CD14-positive monocyte (primary cell): ENCODE measurements at regions of chr15 and their contacts with region 1.

Region 1: GRCh38 chr15:55196458-55197361 is at the start of gene RSL24D1:
- DNase-seq: peak; percentile 97 to 98 (median 98)
- H3K4me3 ChIP-seq: peak within 1 kb of the TSS; percentile 85 to 87 (median 85)
- H3K4me3 Mint-ChIP-seq: no peak within 1 kb of the TSS
- H3K27ac ChIP-seq: peak within 1 kb of the TSS; percentile 95 to 96
- H3K27ac Mint-ChIP-seq: no peak within 1 kb of the TSS
- H3K4me1 ChIP-seq: peaks cover 27 to 34% of the 10 kb centered on the region in 2 donors
- H3K4me1 Mint-ChIP-seq: peaks cover 7% of the 10 kb centered on the region
- H3K27me3 ChIP-seq: no peaks in the 10 kb centered on the region
- H3K27me3 Mint-ChIP-seq: peaks cover 0 to 3% (median 1%) of the 10 kb centered on the region in 3 donors
- CTCF ChIP-seq: peak; percentile 35
- polyA plus RNA-seq, gene RSL24D1: 28.0 to 84.2 (median 73.0) TPM

Region 2: GRCh38 chr15:55218056-55218455 is 21.3 kb after region 1 on chr15:
- intact Hi-C with region 1: no loop called
- DNase-seq: no peak
- H3K4me3 ChIP-seq: no peak overlapping the region
- H3K4me3 Mint-ChIP-seq: no peak overlapping the region
- H3K27ac ChIP-seq: peak overlapping the region in 1 of 2 donors; percentile 70
- H3K27ac Mint-ChIP-seq: peak overlapping the region; percentile 63 to 85 (median 75)
- H3K4me1 ChIP-seq: peaks cover 55% of the 10 kb centered on the region in 2 donors
- H3K4me1 Mint-ChIP-seq: peaks cover 52% of the 10 kb centered on the region
- H3K27me3 ChIP-seq: no peaks in the 10 kb centered on the region
- H3K27me3 Mint-ChIP-seq: peaks cover 0 to 1% (median 0%) of the 10 kb centered on the region in 3 donors
- CTCF ChIP-seq: no peak

Region 3: DNA sequence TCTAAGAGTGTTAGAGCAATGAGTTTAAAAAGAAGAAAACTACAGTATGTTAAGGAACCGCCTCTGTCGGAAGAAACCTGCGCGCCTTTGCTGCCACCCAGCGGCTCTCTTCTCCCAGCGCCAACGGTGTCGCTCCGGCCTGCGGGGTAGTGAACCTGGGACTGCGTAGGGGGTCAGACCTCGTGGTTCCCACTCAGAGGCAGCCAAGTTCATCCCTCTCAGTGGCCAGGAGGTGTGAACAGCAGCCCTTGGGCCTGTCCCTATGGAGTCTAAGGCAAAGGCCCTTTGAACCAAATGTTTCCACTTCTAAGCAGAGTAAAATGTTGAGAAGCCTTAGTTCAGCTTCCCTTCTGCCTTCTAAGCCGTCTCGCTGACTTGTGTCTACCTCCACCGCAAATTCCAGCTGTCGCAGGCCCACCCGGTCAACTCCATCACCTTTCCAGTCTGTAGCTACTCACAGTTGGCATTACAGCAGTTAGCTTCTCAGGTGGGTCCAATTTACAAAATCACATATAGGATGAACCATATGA is 93.9 kb after region 1 on chr15:
- intact Hi-C with region 1: loop called in 1 of 2 experiments (anchors 5 kb)
- DNase-seq: peak; percentile 75 to 87 (median 81)
- H3K4me3 ChIP-seq: peak overlapping the region; percentile 72 to 99 (median 95)
- H3K4me3 Mint-ChIP-seq: peak overlapping the region; percentile 94 to 96
- H3K27ac ChIP-seq: peak overlapping the region; percentile 95 to 99
- H3K27ac Mint-ChIP-seq: peak overlapping the region; percentile 89 to 99 (median 91)
- H3K4me1 ChIP-seq: peaks cover 36 to 55% of the 10 kb centered on the region in 2 donors
- H3K4me1 Mint-ChIP-seq: peaks cover 50% of the 10 kb centered on the region
- H3K27me3 ChIP-seq: no peaks in the 10 kb centered on the region
- H3K27me3 Mint-ChIP-seq: peaks cover 0 to 1% (median 0%) of the 10 kb centered on the region in 3 donors
- CTCF ChIP-seq: peak; percentile 90

Region 4: GRCh38 chr15:55407949-55408791 is 211.5 kb after region 1 on chr15 and contains the starts of genes CCPG1 and PIERCE2:
- intact Hi-C with region 1: loop called in 1 of 2 experiments (anchors 5 kb)
- DNase-seq: peak; percentile 87 to 91 (median 89)
- H3K4me3 ChIP-seq: peak within 1 kb of the TSS; percentile 83 to 96 (median 89)
- H3K4me3 Mint-ChIP-seq: peak within 1 kb of the TSS; percentile 85 to 97
- H3K27ac ChIP-seq: peak within 1 kb of the TSS; percentile 92
- H3K27ac Mint-ChIP-seq: peak within 1 kb of the TSS; percentile 89 to 97 (median 94)
- H3K4me1 ChIP-seq: peaks cover 41 to 52% of the 10 kb centered on the region in 2 donors
- H3K4me1 Mint-ChIP-seq: peaks cover 46% of the 10 kb centered on the region
- H3K27me3 ChIP-seq: no peaks in the 10 kb centered on the region
- H3K27me3 Mint-ChIP-seq: no peaks in the 10 kb centered on the region
- CTCF ChIP-seq: peak; percentile 90
- polyA plus RNA-seq, gene CCPG1: 21.1 to 196 (median 145) TPM
- polyA plus RNA-seq, gene PIERCE2: 0.13 to 1.3 (median 0.61) TPM

Region 5: GRCh38 chr15:55681631-55682030 is 484.9 kb after region 1 on chr15:
- intact Hi-C with region 1: no loop called
- DNase-seq: no peak
- H3K4me3 ChIP-seq: no peak overlapping the region
- H3K4me3 Mint-ChIP-seq: no peak overlapping the region
- H3K27ac ChIP-seq: no peak overlapping the region
- H3K27ac Mint-ChIP-seq: no peak overlapping the region
- H3K4me1 ChIP-seq: peaks cover 7 to 16% of the 10 kb centered on the region in 2 donors
- H3K4me1 Mint-ChIP-seq: peaks cover 15% of the 10 kb centered on the region
- H3K27me3 ChIP-seq: no peaks in the 10 kb centered on the region
- H3K27me3 Mint-ChIP-seq: peaks cover 0 to 2% (median 0%) of the 10 kb centered on the region in 3 donors
- CTCF ChIP-seq: no peak